ENCODE measurements at regions of chr15 and their contacts with region 1.

Region 1: DNA sequence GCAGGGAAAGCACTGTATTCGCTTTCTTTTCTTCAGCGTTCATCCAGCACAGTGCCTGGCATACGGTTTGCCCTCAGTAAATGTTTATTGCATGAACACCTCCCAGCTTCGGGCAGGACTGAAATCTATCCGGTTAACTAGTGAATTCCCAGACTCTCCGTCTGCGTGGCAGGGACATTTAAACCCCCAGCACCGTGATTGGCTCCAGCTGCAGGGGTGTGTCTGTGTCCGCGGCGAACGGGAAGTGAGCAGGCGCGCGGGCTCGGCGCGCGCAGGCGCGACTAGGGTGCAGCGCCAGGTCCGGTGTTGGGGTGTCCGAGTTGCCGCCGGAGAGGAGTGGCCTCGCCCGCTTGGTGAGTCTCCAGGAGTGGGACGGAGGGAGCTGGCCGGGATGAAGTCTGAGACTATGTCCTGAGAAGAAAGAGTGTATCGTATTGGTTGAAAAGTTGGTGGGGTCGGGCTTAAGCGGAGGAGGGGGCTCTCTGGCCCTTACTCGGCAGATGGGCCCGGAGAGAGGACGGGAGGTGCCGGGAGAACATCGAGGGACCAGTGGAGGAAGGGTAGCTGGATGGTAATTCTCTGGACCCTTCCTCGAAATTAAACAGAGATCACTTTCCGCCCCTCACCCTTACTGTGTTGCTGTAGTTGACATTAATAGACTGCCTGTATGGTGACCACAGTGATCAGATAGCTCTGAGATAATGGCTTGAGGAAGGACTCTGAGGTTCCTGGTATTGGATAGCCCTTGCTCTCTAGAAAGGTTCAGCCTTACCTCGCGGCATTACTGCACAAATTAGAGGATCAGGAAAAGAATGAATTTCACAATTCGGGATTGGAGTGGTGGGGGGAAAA is at the start of gene SNAP23:
- DNase-seq: peak; percentile 98
- H3K4me3 ChIP-seq: peak within 1 kb of the TSS; percentile 66 to 98 (median 71)
- H3K27ac ChIP-seq: peak within 1 kb of the TSS; percentile 95
- H3K4me1 ChIP-seq: peaks cover 65% of the 10 kb centered on the region
- H3K27me3 ChIP-seq: no peaks in the 10 kb centered on the region
- CTCF ChIP-seq: no peak
- POLR2A ChIP-seq: peak; percentile 59
- total RNA-seq, gene SNAP23: 126 and 141 TPM in 2 replicates

Region 2: GRCh38 chr15:42273102-42273899 is 222.3 kb before region 1 on chr15 and contains the starts of genes GANC and TMEM87A:
- CTCF ChIA-PET with region 1: no interaction called
- POLR2A ChIA-PET with region 1: interaction called, 3 read pairs
- dilution Hi-C with region 1: no loop called
- intact Hi-C with region 1: loop called (anchors 5 kb)
- DNase-seq: peak; percentile 99
- H3K4me3 ChIP-seq: peak within 1 kb of the TSS; percentile 84 to 97 (median 96)
- H3K27ac ChIP-seq: peak within 1 kb of the TSS; percentile 89
- H3K4me1 ChIP-seq: peaks cover 41% of the 10 kb centered on the region
- H3K27me3 ChIP-seq: no peaks in the 10 kb centered on the region
- CTCF ChIP-seq: no peak
- POLR2A ChIP-seq: peak; percentile 94
- total RNA-seq, gene GANC: 17.8 and 20.0 TPM in 2 replicates
- total RNA-seq, gene TMEM87A: 41.1 and 45.5 TPM in 2 replicates

Region 3: GRCh38 chr15:42511010-42511396 is 15.4 kb after region 1 on chr15:
- CTCF ChIA-PET with region 1: interaction called, 9 read pairs
- POLR2A ChIA-PET with region 1: interaction called, 7 read pairs
- dilution Hi-C with region 1: no loop called
- intact Hi-C with region 1: loop called (anchors 2 kb)
- DNase-seq: peak; percentile 32
- H3K4me3 ChIP-seq: no peak overlapping the region
- H3K27ac ChIP-seq: peak overlapping the region; percentile 55
- H3K4me1 ChIP-seq: peaks cover 14% of the 10 kb centered on the region
- H3K27me3 ChIP-seq: no peaks in the 10 kb centered on the region
- CTCF ChIP-seq: no peak
- POLR2A ChIP-seq: no peak

Region 4: GRCh38 chr15:42548253-42549031 is 52.9 kb after region 1 on chr15 and contains the starts of genes HAUS2 and LRRC57:
- CTCF ChIA-PET with region 1: interaction called, 6 read pairs
- POLR2A ChIA-PET with region 1: no interaction called
- dilution Hi-C with region 1: no loop called
- intact Hi-C with region 1: loop called (anchors 2 kb)
- DNase-seq: peak; percentile 88
- H3K4me3 ChIP-seq: peak within 1 kb of the TSS; percentile 65 to 96 (median 89)
- H3K27ac ChIP-seq: peak within 1 kb of the TSS; percentile 41
- H3K4me1 ChIP-seq: peaks cover 27% of the 10 kb centered on the region
- H3K27me3 ChIP-seq: no peaks in the 10 kb centered on the region
- CTCF ChIP-seq: no peak
- POLR2A ChIP-seq: peak; percentile 95
- total RNA-seq, gene HAUS2: 33.5 and 37.8 TPM in 2 replicates
- total RNA-seq, gene LRRC57: 32.8 and 39.2 TPM in 2 replicates

Region 5: DNA sequence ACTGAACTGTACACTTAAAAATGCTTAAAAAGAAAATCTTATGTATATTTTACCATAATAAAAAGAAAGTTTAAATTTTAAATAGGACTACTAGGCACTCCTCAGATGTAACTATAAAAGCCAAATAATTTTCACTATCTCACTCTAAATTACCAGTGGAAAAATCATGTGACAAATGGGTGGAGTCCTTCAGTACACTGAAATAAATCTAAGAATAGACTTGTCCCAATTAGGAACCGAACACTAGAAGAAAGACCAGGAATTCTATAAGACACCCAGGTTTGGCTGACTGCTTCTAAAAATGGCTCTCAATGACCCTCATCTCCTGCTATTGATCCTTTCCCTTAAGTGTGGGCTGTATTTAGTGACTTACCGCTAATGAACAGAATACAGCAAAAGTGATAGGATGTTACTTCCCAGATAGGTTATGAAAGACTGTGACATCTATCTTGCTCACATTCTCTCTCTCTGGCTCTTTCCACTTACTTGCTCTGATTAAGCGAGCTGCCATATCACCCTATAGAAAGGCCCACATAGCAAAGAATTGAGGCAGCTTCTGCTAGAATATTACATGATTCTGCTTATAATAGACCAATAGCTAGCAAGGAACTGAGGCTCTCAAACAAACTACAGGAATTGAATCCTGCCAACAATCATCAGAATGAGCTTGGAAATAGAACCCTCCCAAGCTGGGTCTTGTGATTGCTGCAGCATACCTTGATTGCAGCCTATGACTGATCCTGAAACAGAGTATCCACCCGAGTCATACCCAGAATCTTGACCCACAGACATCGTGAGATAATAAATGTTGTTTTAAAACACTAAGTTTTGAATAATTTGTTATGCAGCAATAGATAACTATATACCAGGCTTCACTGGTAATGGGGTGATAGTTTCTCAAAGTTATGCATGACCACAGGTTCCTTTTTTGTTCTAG is 408.1 kb after region 1 on chr15:
- CTCF ChIA-PET with region 1: no interaction called
- POLR2A ChIA-PET with region 1: no interaction called
- dilution Hi-C with region 1: no loop called
- intact Hi-C with region 1: no loop called
- DNase-seq: no peak
- H3K4me3 ChIP-seq: no peak overlapping the region
- H3K27ac ChIP-seq: no peak overlapping the region
- H3K4me1 ChIP-seq: no peaks in the 10 kb centered on the region
- H3K27me3 ChIP-seq: no peaks in the 10 kb centered on the region
- CTCF ChIP-seq: no peak
- POLR2A ChIP-seq: no peak

Measured in endothelial cell of umbilical vein (primary cell).